ENCODE measurements at regions of chr2 and their contacts with region 1.

Region 1: DNA sequence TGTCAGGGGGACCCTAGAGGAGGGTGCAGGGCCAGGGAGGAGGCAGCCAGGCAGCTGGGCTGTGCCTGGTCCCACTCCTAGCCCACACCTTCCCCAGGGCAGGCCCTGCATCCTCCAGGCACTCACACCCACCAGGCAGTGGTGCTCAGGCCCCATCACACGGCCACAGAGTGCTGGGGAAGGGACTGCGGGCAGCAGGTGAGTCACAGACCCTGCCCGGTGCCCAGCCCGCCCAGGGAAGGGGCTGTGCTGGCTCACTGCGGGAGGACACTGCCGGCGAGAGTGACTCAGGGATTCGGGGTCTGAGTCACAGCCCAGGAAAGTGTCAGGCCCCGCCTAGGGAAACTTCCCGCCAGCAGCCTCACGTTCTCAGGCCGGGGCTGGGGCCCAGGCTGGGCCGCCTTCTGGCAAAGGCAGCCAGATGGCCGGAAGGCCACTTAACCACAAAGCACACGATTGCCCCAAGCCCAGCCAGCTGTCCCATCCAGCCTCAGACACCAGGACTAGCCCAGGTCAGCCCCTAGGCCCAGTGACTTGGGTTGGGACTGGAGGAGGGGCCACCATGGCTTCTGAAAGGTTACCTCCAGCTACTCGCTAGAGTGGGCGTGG is 42.2 kb downstream of the BIN1 start:
- DNase-seq: peak; percentile 98

Region 2: DNA sequence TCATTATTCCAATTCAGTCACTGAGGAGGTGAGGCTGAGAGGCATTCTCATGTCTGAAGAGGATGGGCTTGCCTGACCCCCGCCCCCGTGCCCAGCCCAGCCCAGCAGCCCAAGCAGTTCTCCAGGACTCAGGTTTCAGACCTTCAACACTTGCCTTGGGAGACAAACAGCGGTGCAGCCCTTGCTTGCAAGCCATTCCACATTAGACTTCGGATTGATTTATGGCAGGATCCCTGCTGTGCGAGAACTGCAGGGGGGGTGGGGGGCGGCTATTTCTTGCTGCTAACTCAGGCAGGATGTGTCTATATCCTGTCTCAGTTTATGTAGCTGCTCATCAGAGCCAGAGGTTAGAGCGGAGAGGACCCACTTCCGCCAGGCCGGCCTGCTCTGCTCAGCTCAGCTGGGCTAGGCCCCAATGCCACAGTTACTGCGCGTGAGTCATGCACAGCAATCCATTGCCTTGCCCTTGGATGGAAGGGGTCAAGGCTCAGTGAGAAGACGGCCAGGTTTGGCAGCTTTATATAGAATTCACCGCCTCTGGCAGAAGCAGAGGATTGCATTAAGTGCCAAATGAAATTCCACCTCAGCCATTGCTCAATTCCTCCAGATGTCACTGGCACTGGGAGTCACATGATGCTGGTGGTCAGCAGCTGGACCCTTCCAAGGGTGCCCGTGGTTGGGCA is 407.0 kb before region 1 on chr2:
- intact Hi-C with region 1: loop called in 1 of 2 experiments (anchors 10 kb)
- DNase-seq: peak; percentile 95

Region 3: DNA sequence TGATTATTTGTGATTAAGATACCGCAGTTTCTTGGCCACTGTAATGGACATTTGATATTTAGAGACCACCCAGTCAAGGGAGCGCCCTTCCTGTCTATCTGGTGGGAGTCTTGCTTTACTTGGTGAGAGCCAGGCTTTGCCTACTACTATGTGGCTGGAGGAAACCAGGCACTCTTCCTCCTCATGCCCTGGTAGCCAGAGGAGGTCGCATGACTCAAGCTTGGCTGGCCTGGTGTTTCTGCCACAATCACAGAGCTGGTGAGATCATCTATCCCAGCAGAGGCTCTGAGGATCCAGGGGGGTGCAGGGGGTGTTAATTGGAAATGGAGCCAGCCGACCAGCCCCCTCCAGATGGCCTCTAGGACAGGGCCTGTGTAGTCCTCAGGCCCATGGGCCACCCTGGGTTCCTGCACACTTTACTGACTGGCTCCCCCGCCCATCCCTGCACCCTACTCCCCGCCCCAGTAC is 89.0 kb after region 1 on chr2:
- intact Hi-C with region 1: loop called in 1 of 2 experiments (anchors 5 kb)
- DNase-seq: peak; percentile 86

Region 4: DNA sequence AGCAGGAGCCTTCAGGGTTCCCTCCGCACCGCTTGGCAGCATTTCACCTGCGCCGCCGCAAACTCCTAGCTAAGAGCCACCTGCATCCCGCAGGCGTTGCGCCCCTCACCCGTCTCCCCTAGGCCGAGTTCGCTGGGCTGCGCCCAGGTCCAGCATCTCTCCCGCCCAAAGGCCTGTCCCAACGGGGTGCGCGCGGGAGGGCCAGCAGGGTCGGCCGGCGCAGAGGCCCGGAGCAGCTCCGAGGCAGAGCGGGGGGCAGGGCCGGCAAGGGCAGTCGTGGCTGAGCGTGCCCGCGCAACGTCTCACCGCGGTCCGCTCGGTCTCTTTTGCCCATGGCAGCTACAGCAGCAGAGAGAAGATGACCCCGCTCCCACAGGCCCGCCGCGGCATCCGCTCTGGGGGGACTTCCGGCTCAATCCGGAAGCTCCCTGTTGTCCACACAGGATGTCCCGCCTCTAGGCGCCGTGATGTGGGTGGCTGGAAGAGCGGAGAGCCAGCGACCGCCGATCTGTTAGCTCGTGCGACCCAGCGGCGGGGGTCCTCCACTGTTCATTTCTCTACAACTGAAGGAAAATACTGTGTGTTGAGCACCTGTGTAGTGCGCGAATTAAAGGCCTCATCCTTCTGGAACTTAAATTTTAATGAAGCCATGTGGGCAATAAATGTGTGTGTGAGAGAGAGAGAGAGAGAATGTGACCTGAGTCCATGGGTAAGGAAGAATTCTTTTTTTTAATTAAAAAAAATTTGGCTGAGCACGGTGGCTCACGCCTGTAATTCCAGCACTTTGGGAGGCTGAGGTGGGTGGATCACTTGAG is 229.2 kb after region 1 on chr2 and contains the start of gene ERCC3:
- intact Hi-C with region 1: loop called in 1 of 2 experiments (anchors 5 kb)
- DNase-seq: peak; percentile 94
- total RNA-seq, gene ERCC3: 28.2 to 30.3 TPM

Region 5: GRCh38 chr2:127355386-127356008 is 290.8 kb after region 1 on chr2:
- intact Hi-C with region 1: no loop called
- DNase-seq: no peak

Measured in posterior vena cava (tissue), 2 donors.